PC-9 (cell line): ENCODE measurements at regions of chr4 and their contacts with region 1.

Region 1: GRCh38 chr4:166165829-166166420 is 292.9 kb downstream of the TLL1 start:
- DNase-seq: peak; percentile 3 to 48
- H3K4me3 ChIP-seq: no peak overlapping the region
- H3K27ac ChIP-seq: no peak overlapping the region
- H3K4me1 ChIP-seq: no peaks in the 10 kb centered on the region
- H3K27me3 ChIP-seq: no peaks in the 10 kb centered on the region
- CTCF ChIP-seq: peak; percentile 74

Region 2: DNA sequence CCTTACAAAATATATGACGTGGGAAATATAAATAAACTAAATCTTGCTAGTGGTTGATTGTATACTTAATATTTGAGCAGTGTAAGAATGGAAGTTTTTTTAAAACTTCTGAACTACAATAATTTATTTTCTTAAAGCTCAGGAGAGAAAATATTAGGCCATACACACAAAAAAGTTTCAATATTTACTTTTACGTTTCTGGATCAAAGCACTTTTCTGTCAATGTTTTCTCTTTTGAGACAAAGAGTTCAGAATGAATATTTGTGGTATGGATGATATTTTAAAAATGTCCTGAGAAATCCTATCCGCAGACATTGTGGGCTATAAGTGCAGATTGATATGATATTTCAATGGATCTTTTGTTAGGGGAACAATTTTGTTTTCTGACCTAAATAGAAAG is 183.0 kb before region 1 on chr4:
- CTCF ChIA-PET with region 1: no interaction called
- POLR2A ChIA-PET with region 1: no interaction called
- intact Hi-C with region 1: no loop called
- DNase-seq: no peak
- H3K4me3 ChIP-seq: no peak overlapping the region
- H3K27ac ChIP-seq: no peak overlapping the region
- H3K4me1 ChIP-seq: no peaks in the 10 kb centered on the region
- H3K27me3 ChIP-seq: no peaks in the 10 kb centered on the region
- CTCF ChIP-seq: no peak

Region 3: GRCh38 chr4:166252487-166253402 is 86.8 kb after region 1 on chr4:
- CTCF ChIA-PET with region 1: no interaction called
- POLR2A ChIA-PET with region 1: no interaction called
- intact Hi-C with region 1: loop called (anchors 2 kb)
- DNase-seq: no peak
- H3K4me3 ChIP-seq: no peak overlapping the region
- H3K27ac ChIP-seq: no peak overlapping the region
- H3K4me1 ChIP-seq: no peaks in the 10 kb centered on the region
- H3K27me3 ChIP-seq: no peaks in the 10 kb centered on the region
- CTCF ChIP-seq: peak; percentile 57

Region 4: GRCh38 chr4:167014944-167015343 is 849.0 kb after region 1 on chr4:
- CTCF ChIA-PET with region 1: no interaction called
- POLR2A ChIA-PET with region 1: no interaction called
- intact Hi-C with region 1: loop called (anchors 10 kb)
- DNase-seq: no peak
- H3K4me3 ChIP-seq: no peak overlapping the region
- H3K27ac ChIP-seq: no peak overlapping the region
- H3K4me1 ChIP-seq: no peaks in the 10 kb centered on the region
- H3K27me3 ChIP-seq: no peaks in the 10 kb centered on the region
- CTCF ChIP-seq: no peak

Region 5: GRCh38 chr4:167290678-167291077 is 1124.8 kb after region 1 on chr4:
- CTCF ChIA-PET with region 1: no interaction called
- POLR2A ChIA-PET with region 1: no interaction called
- intact Hi-C with region 1: loop called (anchors 5 kb)
- DNase-seq: no peak
- H3K4me3 ChIP-seq: no peak overlapping the region
- H3K27ac ChIP-seq: no peak overlapping the region
- H3K4me1 ChIP-seq: no peaks in the 10 kb centered on the region
- H3K27me3 ChIP-seq: no peaks in the 10 kb centered on the region
- CTCF ChIP-seq: peak; percentile 55

Region 6: GRCh38 chr4:168153596-168154440 is 1987.9 kb after region 1 on chr4:
- CTCF ChIA-PET with region 1: no interaction called
- POLR2A ChIA-PET with region 1: no interaction called
- intact Hi-C with region 1: loop called (anchors 5 kb)
- DNase-seq: peak; percentile 37 to 54
- H3K4me3 ChIP-seq: peak overlapping the region; percentile 48; the same call in 1 of the 2 replicates
- H3K27ac ChIP-seq: no peak overlapping the region
- H3K4me1 ChIP-seq: no peaks in the 10 kb centered on the region
- H3K27me3 ChIP-seq: no peaks in the 10 kb centered on the region
- CTCF ChIP-seq: peak; percentile 78